Activated T-helper 1 cell treated with anti-CD3 and anti-CD28 coated beads, Interleukin-12 subunit alpha, Interleukin-12 subunit beta, Interleukin-2, Interleukin-4 antibody, amounts not matched to agents 30 ng/mL and 10 ng/mL and 1 ng/mL, durations not matched to agents 14 hours and 24 hours and 36 hours (primary cell): ENCODE measurements at regions of chr13 and their contacts with region 1.

Region 1: DNA sequence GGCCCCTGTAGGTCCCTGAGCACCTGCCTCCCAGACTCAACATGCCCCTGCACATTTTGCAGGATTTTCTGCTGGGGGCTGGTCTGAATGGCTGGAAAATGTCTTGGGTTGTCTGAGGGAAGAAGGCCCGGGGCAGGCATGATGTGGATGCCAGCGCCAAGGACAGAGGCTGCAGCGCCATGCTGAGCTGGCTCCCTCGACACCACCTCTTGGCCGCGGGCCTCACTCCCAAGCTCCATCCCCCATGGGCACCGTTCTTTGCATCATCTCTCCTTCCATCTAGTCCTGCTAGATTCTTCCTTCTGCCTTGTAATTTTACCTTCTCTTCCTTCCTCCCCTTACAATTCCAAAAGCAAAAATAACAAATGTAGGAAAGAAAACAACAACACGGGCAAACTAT is 70.6 kb downstream of the ZIC5 start:
- DNase-seq: no peak
- H3K4me3 Mint-ChIP-seq: no peak overlapping the region
- H3K27ac Mint-ChIP-seq: no peak overlapping the region
- H3K4me1 Mint-ChIP-seq: peaks cover 7% of the 10 kb centered on the region
- H3K27me3 Mint-ChIP-seq: peaks cover 50% of the 10 kb centered on the region

Region 2: GRCh38 chr13:99702687-99703319 is 198.2 kb before region 1 on chr13:
- intact Hi-C with region 1: no loop called
- DNase-seq: no peak
- H3K4me3 Mint-ChIP-seq: no peak overlapping the region
- H3K27ac Mint-ChIP-seq: no peak overlapping the region
- H3K4me1 Mint-ChIP-seq: peaks cover 10% of the 10 kb centered on the region
- H3K27me3 Mint-ChIP-seq: no peaks in the 10 kb centered on the region

Region 3: DNA sequence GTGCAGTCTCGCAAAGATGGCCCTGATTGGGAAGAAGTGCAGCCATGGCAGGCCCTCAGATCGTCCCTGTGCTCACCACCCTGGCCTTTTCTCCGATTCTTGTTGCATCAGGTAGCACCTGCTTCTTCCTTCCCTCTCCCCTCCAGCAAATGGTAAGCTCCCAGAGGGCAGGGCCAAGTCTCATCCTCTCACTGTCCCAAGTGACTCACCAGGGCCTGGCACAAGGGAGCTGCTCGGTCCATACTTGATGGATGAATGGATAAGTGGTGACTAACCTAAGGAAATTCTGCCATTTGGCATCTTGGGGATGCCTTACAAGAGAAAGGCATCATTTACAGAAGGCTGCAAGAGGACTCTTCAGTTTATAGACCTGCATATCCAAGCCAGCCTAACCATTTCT is 14.3 kb before region 1 on chr13:
- intact Hi-C with region 1: no loop called
- DNase-seq: no peak
- H3K4me3 Mint-ChIP-seq: no peak overlapping the region
- H3K27ac Mint-ChIP-seq: no peak overlapping the region
- H3K4me1 Mint-ChIP-seq: no peaks in the 10 kb centered on the region
- H3K27me3 Mint-ChIP-seq: peaks cover 14% of the 10 kb centered on the region

Region 4: GRCh38 chr13:99969919-99970621 is 69.1 kb after region 1 on chr13:
- intact Hi-C with region 1: loop called (anchors 2 kb)
- DNase-seq: no peak
- H3K4me3 Mint-ChIP-seq: peak overlapping the region; percentile 54
- H3K27ac Mint-ChIP-seq: peak overlapping the region; percentile 87
- H3K4me1 Mint-ChIP-seq: peaks cover 17% of the 10 kb centered on the region
- H3K27me3 Mint-ChIP-seq: peaks cover 65% of the 10 kb centered on the region

Region 5: GRCh38 chr13:100235311-100235901 is 334.4 kb after region 1 on chr13:
- intact Hi-C with region 1: loop called (anchors 1 kb)
- DNase-seq: no peak
- H3K4me3 Mint-ChIP-seq: no peak overlapping the region
- H3K27ac Mint-ChIP-seq: no peak overlapping the region
- H3K4me1 Mint-ChIP-seq: peaks cover 15% of the 10 kb centered on the region
- H3K27me3 Mint-ChIP-seq: no peaks in the 10 kb centered on the region

Region 6: DNA sequence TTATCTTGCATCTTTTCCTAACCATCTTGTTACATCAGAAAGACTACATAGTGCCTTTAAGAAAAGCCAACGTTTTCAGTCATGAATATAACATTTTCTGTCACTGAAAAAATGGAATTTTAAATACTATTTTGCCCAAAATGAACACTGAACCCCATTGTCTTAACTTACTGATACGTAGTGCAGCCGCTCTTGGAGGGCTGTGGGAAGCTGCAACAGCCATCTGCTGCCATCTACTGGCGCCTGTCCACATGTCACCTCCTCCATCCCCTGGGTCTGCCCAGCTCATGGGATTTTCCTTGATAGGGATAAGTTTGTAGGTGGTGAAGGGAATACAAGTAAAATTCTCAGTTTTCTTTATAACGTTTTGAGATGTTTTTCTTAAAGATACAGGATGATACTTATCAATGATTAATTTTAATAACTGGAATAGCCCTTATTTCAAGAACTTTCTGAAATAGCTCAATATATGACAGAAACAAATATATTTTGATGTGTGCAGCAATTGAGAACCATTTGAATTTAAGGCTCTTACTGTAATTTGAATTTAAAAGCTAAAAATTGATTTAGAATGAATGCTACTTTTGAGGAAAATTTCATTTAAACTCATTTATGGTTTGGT is 613.9 kb after region 1 on chr13:
- intact Hi-C with region 1: loop called (anchors 1 kb)
- DNase-seq: peak; percentile 52
- H3K4me3 Mint-ChIP-seq: no peak overlapping the region
- H3K27ac Mint-ChIP-seq: no peak overlapping the region
- H3K4me1 Mint-ChIP-seq: peaks cover 54% of the 10 kb centered on the region
- H3K27me3 Mint-ChIP-seq: peaks cover 7% of the 10 kb centered on the region

Region 7: DNA sequence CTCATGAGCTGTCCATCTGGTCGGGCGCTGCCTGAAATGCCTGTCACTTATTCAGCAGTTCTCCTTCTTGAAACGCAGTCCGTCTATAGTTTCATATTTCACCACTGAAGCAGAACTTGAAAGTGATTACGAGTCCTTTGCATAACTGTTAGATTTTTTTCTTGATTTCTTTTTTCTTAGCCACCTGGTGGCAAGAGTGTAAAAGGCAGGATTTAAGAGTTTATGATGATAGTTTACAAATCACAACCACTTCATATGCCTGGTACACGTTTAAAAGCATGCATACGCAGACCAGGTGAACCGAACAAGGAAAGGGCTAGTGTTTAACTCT is 641.8 kb after region 1 on chr13:
- intact Hi-C with region 1: loop called (anchors 1 kb)
- DNase-seq: no peak
- H3K4me3 Mint-ChIP-seq: no peak overlapping the region
- H3K27ac Mint-ChIP-seq: no peak overlapping the region
- H3K4me1 Mint-ChIP-seq: peaks cover 19% of the 10 kb centered on the region
- H3K27me3 Mint-ChIP-seq: peaks cover 3% of the 10 kb centered on the region